A549 (cell line): ENCODE measurements at regions of chr22 and their contacts with region 1.

Region 1: DNA sequence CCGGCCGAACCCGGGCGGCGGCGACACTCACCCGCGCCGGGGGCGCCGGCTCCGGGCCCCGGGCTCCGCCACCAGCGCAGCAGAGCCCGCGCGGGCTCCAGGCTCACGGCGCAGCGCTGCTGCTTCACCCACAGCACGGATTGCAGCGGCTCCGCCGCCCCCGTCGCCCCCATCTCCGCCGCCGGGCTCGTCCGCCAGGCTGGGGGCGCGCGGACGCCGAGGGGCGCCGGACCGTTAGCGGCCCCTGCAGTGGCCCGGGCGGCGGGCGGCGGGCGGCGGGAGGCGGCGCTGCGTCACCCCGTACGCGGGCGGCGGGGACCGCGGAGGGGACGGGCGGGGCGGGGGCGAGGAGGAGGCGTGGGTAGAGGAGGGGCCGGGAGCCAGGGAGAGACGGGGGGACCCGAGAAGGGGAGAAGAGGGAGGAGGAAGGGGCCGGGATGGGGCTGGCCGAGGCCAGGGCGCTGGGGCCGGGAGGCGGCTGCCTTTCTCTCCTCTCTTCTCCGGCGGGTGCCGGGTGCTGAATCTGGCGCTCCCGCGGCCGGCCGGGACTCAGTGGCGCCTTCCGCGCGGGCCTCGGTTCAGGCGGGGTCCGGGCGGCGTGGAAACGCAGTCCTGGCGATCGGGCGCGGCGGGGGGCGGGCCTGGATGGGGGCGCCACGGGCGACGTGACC is at the start of gene CERK:
- DNase-seq: peak; percentile 31 to 41
- ATAC-seq: peak; percentile 62 to 68
- H3K4me3 ChIP-seq: peak within 1 kb of the TSS; percentile 96
- H3K27ac ChIP-seq: peak within 1 kb of the TSS; percentile 94 to 99
- H3K4me1 ChIP-seq: peaks cover 32% of the 10 kb centered on the region
- CTCF ChIP-seq: no peak
- EP300 ChIP-seq: no peak
- POLR2A ChIP-seq: peak; percentile 25; the same call in 1 of the 2 replicates
- RAD21 ChIP-seq: no peak
- polyA plus RNA-seq, gene CERK: 13.1 and 17.7 TPM in 2 replicates

Region 2: DNA sequence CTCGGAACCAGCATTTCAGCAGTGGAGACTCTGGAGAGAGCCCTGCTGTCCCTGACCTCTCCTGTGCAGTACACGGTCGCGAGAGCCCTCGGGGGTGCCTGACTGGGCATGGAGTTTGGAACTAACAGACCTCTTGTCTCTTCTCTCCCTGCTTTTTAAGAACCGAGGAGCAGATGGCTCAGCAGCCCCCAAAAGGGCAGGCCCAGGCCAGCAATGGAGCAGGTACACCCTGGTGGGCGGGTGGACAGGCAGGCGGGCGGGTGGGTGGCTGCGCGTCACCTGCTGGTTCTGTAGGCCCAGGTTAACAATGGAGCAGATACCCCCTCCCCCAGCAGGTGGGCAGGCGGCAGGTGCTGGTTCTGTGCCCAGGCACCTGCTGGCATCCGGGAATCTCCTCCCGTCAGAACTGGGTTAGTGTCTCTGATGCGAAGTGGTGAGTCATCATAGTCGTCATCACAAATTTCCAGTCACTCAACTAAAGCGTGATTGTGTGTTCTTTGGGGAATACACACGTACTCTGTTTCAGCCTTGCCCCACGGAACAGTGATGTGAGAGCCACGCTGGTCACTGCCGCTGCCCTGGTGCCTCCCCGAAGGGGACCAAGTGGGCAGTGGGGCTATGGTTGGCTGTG is 76.8 kb before region 1 on chr22:
- CTCF ChIA-PET with region 1: no interaction called
- POLR2A ChIA-PET with region 1: no interaction called
- DNase-seq: peak; percentile 58 to 64
- ATAC-seq: peak; percentile 66 to 69
- H3K4me3 ChIP-seq: no peak overlapping the region
- H3K27ac ChIP-seq: peak overlapping the region; percentile 60 to 82; a peak in 5 of 6 replicates
- H3K4me1 ChIP-seq: peaks cover 19% of the 10 kb centered on the region
- CTCF ChIP-seq: no peak
- EP300 ChIP-seq: no peak
- POLR2A ChIP-seq: no peak
- RAD21 ChIP-seq: no peak

Region 3: GRCh38 chr22:46748908-46749675 is 11.0 kb after region 1 on chr22:
- CTCF ChIA-PET with region 1: interaction called, 26 read pairs
- POLR2A ChIA-PET with region 1: interaction called, 3 read pairs
- DNase-seq: no peak
- ATAC-seq: no peak
- H3K4me3 ChIP-seq: no peak overlapping the region
- H3K27ac ChIP-seq: peak overlapping the region in 1 of 2 experiments; percentile 96; a peak in 1 of 6 replicates
- H3K4me1 ChIP-seq: peaks cover 32% of the 10 kb centered on the region
- CTCF ChIP-seq: no peak
- EP300 ChIP-seq: no peak
- POLR2A ChIP-seq: no peak
- RAD21 ChIP-seq: no peak

Region 4: DNA sequence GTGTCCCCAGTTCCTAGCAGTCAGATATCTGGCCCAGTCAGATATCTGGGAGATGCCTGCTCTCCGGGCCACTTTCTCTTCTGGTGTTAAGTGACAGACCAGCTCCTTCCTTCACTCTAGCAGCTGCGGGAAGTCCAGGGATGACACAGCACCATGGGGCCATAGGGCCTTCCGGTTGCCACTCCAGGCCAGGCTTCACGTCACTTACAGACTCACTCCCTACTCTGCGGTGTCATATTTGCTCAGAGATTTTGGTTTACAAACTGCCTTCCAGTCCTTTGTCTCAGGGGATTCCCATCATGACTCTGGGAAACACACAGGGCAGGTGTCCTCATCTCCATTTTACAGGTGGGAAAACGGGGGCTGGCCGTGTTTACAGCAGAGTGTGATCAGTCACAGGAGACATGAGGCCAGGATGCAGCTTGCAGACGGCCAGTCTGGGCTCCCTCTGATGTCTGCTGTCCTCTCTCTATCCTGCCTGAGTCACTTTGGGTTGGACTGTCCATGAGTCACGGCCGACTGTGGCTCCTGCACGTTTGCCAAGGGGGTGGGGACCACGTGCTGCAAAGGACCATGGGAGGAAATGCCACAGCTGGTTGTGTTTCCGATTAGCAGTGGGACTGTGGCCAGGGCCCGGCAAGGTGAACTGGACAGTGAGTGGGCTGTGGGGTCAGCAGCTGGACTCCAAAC is 16.1 kb after region 1 on chr22:
- CTCF ChIA-PET with region 1: interaction called, 29 read pairs
- POLR2A ChIA-PET with region 1: interaction called, 3 read pairs
- DNase-seq: peak; percentile 90 to 92
- ATAC-seq: peak; percentile 91 to 92
- H3K4me3 ChIP-seq: no peak overlapping the region
- H3K27ac ChIP-seq: peak overlapping the region; percentile 92 to 96
- H3K4me1 ChIP-seq: peaks cover 44% of the 10 kb centered on the region
- CTCF ChIP-seq: no peak
- EP300 ChIP-seq: peak in 1 of 2 experiments; percentile 26; a peak in 1 of 5 replicates
- POLR2A ChIP-seq: peak; percentile 51; the same call in 1 of the 2 replicates
- RAD21 ChIP-seq: no peak

Region 5: DNA sequence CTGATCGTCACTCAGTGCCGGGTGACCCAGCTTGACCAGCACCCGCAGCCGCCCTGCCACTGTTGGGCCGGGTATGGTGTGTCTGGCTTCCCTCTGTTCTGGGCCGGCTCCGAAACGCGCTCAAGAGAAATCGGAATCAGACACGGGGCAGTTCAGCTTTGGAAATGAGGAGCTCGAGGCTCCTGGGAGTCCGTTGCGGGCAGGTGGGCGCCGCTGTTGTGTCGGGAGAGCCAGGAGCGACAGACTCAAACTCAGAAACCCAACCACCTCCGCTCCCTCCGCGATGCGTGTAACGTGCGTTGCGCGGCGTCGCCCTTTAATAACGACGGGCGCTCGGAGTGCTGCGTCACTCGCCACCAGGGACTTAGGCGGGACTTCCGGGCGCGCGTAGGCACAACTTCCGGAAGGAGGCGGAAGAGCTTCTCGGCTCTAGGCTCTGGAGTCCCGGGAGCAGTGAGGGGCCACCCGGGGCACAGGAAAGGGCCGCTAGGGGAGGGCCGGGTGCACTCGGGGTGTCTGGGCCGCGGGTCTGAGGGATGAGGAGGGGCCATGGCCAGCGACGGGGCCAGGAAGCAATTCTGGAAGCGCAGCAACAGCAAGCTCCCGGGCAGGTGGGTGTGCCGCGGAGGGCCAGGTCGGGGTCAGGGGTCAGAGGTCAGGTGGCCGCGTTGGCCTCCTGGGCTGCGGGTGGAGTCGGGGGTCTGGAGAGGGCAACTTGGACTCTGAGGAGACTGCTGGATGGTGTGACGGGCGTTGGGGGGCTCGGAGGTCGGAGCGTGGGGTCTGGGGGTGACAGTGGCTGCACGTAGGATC is 24.3 kb after region 1 on chr22 and contains the start of gene TBC1D22A:
- CTCF ChIA-PET with region 1: interaction called, 29 read pairs
- POLR2A ChIA-PET with region 1: interaction called, 28 read pairs
- DNase-seq: peak; percentile 89 to 93
- ATAC-seq: peak; percentile 95 to 96
- H3K4me3 ChIP-seq: peak within 1 kb of the TSS; percentile 98
- H3K27ac ChIP-seq: peak within 1 kb of the TSS; percentile 97 to 99
- H3K4me1 ChIP-seq: peaks cover 23% of the 10 kb centered on the region
- CTCF ChIP-seq: no peak
- EP300 ChIP-seq: no peak
- POLR2A ChIP-seq: peak; percentile 95
- RAD21 ChIP-seq: no peak
- polyA plus RNA-seq, gene TBC1D22A: 10.4 and 10.8 TPM in 2 replicates